CD4-positive, alpha-beta memory T cell (primary cell): ENCODE measurements at regions of chr11 and their contacts with region 1.

Region 1: DNA sequence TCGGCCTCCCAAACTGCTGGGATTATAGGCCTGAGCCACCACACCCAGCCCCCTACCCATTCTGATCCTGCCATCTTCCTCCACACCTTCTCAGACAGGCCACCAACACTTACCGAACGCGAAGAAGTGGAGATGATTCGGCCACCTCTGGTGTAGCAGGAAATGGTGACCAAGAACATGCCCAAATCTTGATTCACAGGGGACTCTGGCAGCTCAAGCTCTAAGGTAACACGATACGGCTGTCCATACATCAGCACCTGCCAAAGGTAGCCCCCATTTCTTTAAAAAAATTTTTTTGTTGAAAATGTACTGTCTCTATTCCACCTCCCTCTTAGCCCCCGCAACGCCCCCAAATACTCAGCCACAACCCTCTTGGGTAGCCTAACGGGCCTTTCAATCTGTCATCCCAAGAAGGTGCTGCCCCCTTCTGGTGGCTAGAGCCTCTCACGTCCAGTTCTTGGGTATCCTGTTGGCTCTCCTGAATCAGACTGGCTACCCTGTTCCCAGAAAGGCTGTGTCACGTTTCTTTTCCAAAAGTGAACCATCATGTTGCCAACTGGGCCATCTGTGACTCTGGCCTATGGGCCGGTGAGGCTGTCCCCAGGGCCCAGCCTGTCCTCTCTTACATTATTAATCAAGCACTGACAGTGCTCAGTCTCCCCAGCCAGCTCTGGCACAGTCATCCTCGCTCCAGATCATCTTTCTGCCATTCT is 5.3 kb upstream of the LRRN4CL start:
- DNase-seq: peak; percentile 73 to 80 (median 74)
- H3K4me3 ChIP-seq: no peak overlapping the region
- H3K4me3 Mint-ChIP-seq: no peak overlapping the region
- H3K27ac ChIP-seq: no peak overlapping the region
- H3K27ac Mint-ChIP-seq: peak overlapping the region in 4 of 7 donors; percentile 7 to 77 (median 56)
- H3K4me1 ChIP-seq: no peaks in the 10 kb centered on the region
- H3K4me1 Mint-ChIP-seq: peaks cover 5 to 7% (median 6%) of the 10 kb centered on the region in 4 donors
- H3K27me3 ChIP-seq: no peaks in the 10 kb centered on the region
- H3K27me3 Mint-ChIP-seq: no peaks in the 10 kb centered on the region

Region 2: GRCh38 chr11:62383822-62384221 is 310.8 kb before region 1 on chr11:
- CTCF ChIA-PET with region 1: interaction called, 3 read pairs
- POLR2A ChIA-PET with region 1: no interaction called
- intact Hi-C with region 1: loop called (anchors 5 kb)
- DNase-seq: no peak
- H3K4me3 ChIP-seq: no peak overlapping the region
- H3K4me3 Mint-ChIP-seq: no peak overlapping the region
- H3K27ac ChIP-seq: no peak overlapping the region
- H3K27ac Mint-ChIP-seq: no peak overlapping the region
- H3K4me1 ChIP-seq: peaks cover 18% of the 10 kb centered on the region
- H3K4me1 Mint-ChIP-seq: peaks cover 5 to 19% (median 10%) of the 10 kb centered on the region in 4 donors
- H3K27me3 ChIP-seq: no peaks in the 10 kb centered on the region
- H3K27me3 Mint-ChIP-seq: no peaks in the 10 kb centered on the region